AG04449 (cell line): ENCODE measurements at regions of chr20 and their contacts with region 1.

Region 1: DNA sequence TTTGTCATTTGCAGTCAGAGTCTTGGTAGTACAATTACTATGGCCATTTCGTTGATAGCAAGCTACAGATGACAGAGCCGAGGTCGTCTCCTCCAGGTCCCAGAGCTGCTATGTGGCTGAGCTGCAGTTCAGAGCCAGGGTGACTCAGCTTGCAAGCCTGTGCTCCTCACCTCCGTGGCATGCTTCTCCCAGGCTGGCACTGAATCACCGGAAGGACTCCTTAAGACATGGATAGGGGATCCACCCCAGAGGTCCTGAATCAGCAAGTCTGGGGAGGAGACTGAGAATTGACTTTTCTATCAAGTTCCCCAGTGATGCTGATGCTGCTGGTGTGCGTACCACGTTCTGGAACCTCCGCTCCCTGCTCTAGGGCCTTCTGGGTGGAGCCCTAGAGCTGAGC is 291.2 kb downstream of the CDH26 start:
- DNase-seq: peak; percentile 86
- H3K4me3 ChIP-seq: no peak overlapping the region
- CTCF ChIP-seq: no peak

Region 2: DNA sequence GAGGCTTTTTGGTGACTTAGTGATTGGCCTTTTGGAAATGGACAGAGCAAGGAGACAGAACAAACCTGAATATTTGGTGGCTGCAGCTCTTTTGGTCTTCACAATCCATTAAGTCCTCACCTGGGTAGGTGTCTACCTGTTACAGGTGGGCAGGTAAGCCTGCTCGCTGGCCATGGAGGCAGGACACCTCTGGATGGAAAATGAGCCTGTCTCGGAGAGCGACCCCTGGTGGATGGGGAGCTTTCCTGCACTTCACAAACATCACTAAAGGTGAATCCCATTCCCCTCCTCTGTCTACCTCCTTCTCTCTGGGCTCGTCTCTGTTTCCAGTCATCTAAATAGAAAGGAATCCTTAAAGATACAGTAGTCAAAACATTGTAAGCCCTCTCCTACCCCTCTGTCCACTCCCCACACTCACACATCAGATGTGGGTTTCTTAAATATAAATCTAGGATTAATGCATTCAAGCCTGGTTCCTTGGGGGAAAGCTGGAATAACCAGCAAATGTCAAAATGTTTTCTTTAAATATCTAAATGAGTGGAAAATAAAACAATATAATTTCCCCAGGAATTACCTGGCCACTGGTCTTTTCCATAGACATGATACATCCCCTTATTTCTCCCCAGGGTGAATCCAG is 13.6 kb after region 1 on chr20:
- CTCF ChIA-PET with region 1: interaction called, 62 read pairs
- POLR2A ChIA-PET with region 1: no interaction called
- DNase-seq: no peak
- H3K4me3 ChIP-seq: no peak overlapping the region
- CTCF ChIP-seq: peak; percentile 75

Region 3: DNA sequence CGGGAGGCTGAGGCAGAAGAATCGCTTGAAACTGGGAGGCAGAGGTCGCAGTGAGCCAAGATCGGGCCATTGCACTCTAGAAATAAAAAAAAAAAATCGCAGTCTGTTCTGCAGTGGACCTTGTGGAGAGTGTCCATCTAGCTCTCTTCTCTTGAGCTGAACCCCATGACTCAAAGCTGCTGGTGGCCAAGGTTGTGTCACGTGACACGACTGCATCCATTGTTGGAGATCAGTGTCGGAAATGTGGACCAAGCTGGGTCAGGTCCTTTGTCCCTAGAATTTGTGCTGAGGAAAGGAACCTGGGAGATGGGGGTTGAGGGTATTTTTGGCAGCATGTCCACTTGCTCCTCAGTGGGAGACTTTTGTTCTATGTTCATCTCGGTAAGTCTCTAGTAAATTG is 437.8 kb after region 1 on chr20:
- CTCF ChIA-PET with region 1: no interaction called
- POLR2A ChIA-PET with region 1: no interaction called
- DNase-seq: no peak
- H3K4me3 ChIP-seq: no peak overlapping the region
- CTCF ChIP-seq: no peak